Caco-2 (cell line): ENCODE measurements at regions of chr6 and their contacts with region 1.

Region 1: DNA sequence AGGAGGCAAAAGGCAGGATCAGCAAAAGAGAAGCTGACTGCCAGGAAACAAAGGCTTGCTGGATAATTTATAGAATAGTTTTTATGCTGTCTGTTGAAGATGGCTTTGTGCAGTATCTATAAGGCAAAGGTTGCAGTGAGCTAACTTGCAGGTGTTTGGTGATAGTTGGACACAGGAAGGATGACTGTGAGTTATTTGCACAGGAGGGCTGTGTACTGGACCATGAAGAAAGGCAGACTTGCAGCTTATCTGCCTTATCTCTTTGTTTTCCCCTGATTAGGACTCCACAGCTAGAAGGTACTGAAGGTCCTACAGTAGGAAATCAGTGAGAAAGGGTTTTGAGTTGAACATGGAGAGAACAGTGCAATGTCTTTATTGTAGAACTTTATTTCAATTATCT is 2.1 kb downstream of the BTN1A1 start:
- DNase-seq: peak; percentile 63 to 74
- H3K4me3 ChIP-seq: peak overlapping the region; percentile 38
- H3K4me3 Mint-ChIP-seq: peak overlapping the region; percentile 88
- H3K27ac Mint-ChIP-seq: peak overlapping the region; percentile 82
- H3K4me1 ChIP-seq: peaks cover 28% of the 10 kb centered on the region
- H3K4me1 Mint-ChIP-seq: peaks cover 28% of the 10 kb centered on the region
- H3K27me3 ChIP-seq: no peaks in the 10 kb centered on the region
- H3K27me3 Mint-ChIP-seq: no peaks in the 10 kb centered on the region
- CTCF ChIP-seq: no peak

Region 2: GRCh38 chr6:26514984-26515383 is 12.8 kb after region 1 on chr6:
- CTCF ChIA-PET with region 1: no interaction called
- POLR2A ChIA-PET with region 1: no interaction called
- intact Hi-C with region 1: loop called (anchors 1 kb)
- DNase-seq: peak; percentile 60 to 64
- H3K4me3 ChIP-seq: no peak overlapping the region
- H3K4me3 Mint-ChIP-seq: peak overlapping the region; percentile 44
- H3K27ac Mint-ChIP-seq: peak overlapping the region; percentile 82
- H3K4me1 ChIP-seq: peaks cover 32% of the 10 kb centered on the region
- H3K4me1 Mint-ChIP-seq: peaks cover 30% of the 10 kb centered on the region
- H3K27me3 ChIP-seq: no peaks in the 10 kb centered on the region
- H3K27me3 Mint-ChIP-seq: no peaks in the 10 kb centered on the region
- CTCF ChIP-seq: no peak

Region 3: DNA sequence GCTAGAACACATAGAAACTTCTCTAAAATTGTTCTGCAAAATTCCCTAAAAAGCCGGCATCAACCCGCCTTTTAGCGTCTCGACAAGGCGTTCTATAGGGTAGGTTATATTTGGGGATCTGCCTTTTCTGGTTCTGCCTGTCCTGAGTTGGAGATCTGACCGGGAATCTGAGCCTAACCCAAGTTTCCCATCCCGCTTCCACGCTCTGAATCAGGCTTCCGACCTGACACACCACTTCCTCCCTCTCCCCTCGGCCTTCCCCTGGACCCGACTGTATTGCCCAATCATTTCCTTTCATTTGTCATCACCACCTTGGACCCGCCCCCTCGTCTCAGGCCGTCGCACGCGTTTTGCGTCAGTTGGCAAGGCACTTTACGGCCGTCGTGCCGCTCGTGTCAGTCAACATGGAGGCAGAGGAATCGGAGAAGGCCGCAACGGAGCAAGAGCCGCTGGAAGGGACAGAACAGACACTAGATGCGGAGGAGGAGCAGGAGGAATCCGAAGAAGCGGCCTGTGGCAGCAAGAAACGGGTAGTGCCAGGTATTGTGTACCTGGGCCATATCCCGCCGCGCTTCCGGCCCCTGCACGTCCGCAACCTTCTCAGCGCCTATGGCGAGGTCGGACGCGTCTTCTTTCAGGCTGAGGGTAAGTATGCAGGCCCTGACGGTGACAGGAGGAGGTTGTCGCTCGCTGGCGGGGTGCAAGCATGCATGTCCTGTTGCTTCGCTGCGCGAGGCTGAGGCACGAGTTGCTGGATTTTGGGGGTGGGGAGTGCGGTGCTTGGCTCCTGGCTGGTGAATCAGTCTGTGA is 94.6 kb after region 1 on chr6 and contains the start of gene ABT1:
- CTCF ChIA-PET with region 1: no interaction called
- POLR2A ChIA-PET with region 1: no interaction called
- intact Hi-C with region 1: no loop called
- DNase-seq: peak; percentile 97 to 98
- H3K4me3 ChIP-seq: peak within 1 kb of the TSS; percentile 91
- H3K4me3 Mint-ChIP-seq: no peak within 1 kb of the TSS
- H3K27ac Mint-ChIP-seq: no peak within 1 kb of the TSS
- H3K4me1 ChIP-seq: no peaks in the 10 kb centered on the region
- H3K4me1 Mint-ChIP-seq: no peaks in the 10 kb centered on the region
- H3K27me3 ChIP-seq: no peaks in the 10 kb centered on the region
- H3K27me3 Mint-ChIP-seq: peaks cover 3% of the 10 kb centered on the region
- CTCF ChIP-seq: no peak
- total RNA-seq, gene ABT1: 15.1 and 17.0 TPM in 2 replicates

Region 4: DNA sequence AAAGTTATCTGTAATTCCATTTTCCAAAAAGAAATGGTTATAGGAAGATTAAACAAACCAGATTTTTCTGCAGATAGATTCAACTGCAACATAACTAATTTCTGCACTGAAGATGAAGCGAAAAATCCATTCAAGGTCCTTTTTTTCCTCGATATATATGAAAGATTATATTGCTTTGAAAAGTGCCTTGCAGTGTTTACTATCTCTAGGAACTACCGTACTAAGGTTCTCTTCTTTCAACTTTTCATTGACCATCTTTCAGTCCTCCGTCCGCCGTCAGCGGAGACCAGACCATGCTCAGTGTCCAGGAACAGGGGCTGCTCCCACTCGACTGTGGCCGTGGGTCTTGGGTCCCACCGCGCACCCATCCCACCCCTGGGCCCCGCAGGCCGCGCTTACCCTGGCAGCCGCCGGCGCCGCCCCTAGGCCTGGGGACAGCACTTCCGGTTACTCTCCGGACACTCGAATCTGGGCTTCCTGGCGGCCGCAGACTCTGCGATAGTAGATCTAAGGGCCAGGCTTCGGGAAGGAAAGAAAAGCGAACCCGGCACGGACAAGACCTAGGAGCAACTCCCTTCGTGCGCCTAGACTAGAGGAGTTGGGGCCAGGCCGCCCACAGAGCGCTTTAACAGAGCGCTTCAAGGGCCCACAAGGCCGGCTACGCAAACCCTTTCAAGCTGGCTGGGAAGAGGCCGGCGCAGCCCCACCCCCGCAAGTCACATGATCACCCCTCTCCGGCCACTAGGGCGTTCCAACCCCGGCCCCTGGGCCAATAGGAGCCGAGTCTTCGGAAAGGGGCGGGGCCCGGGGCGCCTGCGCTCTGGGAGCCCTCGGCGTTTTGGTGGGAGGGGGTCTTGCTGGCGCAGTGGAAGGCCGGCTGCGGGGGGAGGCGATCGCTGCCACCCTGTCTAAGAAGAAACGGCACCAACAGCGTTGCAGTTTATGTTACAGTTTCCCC is 157.2 kb after region 1 on chr6 and contains the start of gene ZNF322:
- CTCF ChIA-PET with region 1: no interaction called
- POLR2A ChIA-PET with region 1: no interaction called
- intact Hi-C with region 1: no loop called
- DNase-seq: peak; percentile 93 to 96
- H3K4me3 ChIP-seq: peak within 1 kb of the TSS; percentile 66
- H3K4me3 Mint-ChIP-seq: peak within 1 kb of the TSS; percentile 87
- H3K27ac Mint-ChIP-seq: peak within 1 kb of the TSS; percentile 33
- H3K4me1 ChIP-seq: no peaks in the 10 kb centered on the region
- H3K4me1 Mint-ChIP-seq: peaks cover 7% of the 10 kb centered on the region
- H3K27me3 ChIP-seq: no peaks in the 10 kb centered on the region
- H3K27me3 Mint-ChIP-seq: peaks cover 16% of the 10 kb centered on the region
- CTCF ChIP-seq: no peak
- total RNA-seq, gene ZNF322: 22.5 and 26.1 TPM in 2 replicates

Region 5: DNA sequence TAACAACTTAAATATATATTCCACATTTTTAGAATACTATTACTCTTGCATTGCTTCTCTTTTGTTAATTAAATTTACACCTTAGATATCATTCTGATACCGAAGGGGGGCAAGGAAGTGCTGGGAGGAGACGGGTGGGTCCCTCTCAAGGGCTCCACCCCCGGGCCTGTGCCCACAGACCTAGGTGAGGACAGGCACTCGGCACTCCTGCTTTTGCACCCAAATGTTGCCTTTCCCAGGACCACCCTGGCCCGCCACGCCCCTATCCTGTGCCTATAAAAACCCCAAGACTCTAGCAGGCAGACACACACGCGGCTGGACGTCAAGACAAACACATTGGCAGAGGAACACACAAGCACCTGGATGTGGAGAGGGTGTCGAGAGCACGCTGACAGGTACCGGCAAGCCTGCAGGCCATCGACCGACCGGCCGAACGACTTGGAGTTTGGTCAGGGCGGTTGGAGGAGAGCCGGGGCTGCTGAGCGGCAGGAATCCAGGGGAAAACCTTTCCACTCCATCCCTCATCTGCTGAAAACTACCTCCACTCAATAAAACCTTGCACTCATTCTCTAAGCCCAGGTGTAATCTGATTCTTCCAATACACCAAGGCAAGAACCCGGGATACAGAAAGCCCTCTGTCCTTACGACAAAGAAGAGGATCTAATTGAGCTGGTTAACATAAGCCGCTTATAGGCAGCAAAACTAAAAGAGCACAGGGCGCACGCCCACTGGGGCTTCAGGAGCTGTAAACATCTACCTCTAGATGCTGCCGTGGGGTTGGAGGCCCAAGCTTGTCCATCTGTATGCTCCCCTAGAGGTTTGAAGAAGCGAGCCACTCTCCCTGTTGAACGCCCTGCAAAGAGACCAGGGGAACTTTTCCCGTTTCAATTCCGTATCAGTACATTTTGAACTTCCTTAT is 548.0 kb after region 1 on chr6:
- CTCF ChIA-PET with region 1: no interaction called
- POLR2A ChIA-PET with region 1: no interaction called
- intact Hi-C with region 1: no loop called
- DNase-seq: no peak
- H3K4me3 ChIP-seq: no peak overlapping the region
- H3K4me3 Mint-ChIP-seq: no peak overlapping the region
- H3K27ac Mint-ChIP-seq: no peak overlapping the region
- H3K4me1 ChIP-seq: peaks cover 12% of the 10 kb centered on the region
- H3K4me1 Mint-ChIP-seq: peaks cover 8% of the 10 kb centered on the region
- H3K27me3 ChIP-seq: no peaks in the 10 kb centered on the region
- H3K27me3 Mint-ChIP-seq: no peaks in the 10 kb centered on the region
- CTCF ChIP-seq: no peak